ENCODE measurements at regions of chr11 and their contacts with region 1.

Region 1: GRCh38 chr11:38019072-38019755 is 1421.2 kb upstream of the RAG2 start:
- DNase-seq: peak; percentile 87
- ATAC-seq: peak; percentile 76
- H3K4me3 ChIP-seq: no peak overlapping the region
- H3K27ac ChIP-seq: peak overlapping the region; percentile 21
- H3K4me1 ChIP-seq: peaks cover 14% of the 10 kb centered on the region
- H3K27me3 ChIP-seq: no peaks in the 10 kb centered on the region
- CTCF ChIP-seq: peak; percentile 41; the same call in 1 of the 2 replicates

Region 2: DNA sequence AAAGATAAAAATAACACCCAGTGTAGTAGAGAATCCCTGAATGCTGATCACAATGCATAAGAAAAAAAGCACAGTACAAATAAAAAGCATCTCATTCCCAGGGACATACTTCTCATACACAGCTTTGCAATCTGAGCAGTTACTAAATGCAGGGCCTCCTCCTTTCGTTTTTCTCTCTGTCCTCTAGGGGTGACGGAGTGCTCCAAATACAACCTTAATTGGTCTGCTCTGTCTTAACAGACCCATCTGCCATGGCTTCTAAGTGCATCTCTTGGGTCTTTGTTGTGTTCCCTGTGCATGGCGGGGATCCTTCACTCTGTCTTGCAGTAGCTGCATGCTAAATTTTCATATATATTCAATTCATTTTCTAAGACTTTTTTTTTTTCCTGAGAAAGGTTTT is 307.0 kb before region 1 on chr11:
- CTCF ChIA-PET with region 1: interaction called, 10 read pairs
- POLR2A ChIA-PET with region 1: no interaction called
- intact Hi-C with region 1: no loop called
- DNase-seq: peak; percentile 20
- ATAC-seq: peak; percentile 64
- H3K4me3 ChIP-seq: no peak overlapping the region
- H3K27ac ChIP-seq: no peak overlapping the region
- H3K4me1 ChIP-seq: no peaks in the 10 kb centered on the region
- H3K27me3 ChIP-seq: no peaks in the 10 kb centered on the region
- CTCF ChIP-seq: peak; percentile 48

Region 3: GRCh38 chr11:38169012-38169684 is 149.9 kb after region 1 on chr11:
- CTCF ChIA-PET with region 1: no interaction called
- POLR2A ChIA-PET with region 1: no interaction called
- intact Hi-C with region 1: no loop called
- DNase-seq: peak; percentile 85
- ATAC-seq: peak; percentile 93
- H3K4me3 ChIP-seq: no peak overlapping the region
- H3K27ac ChIP-seq: 0 out of 2 replicates have a peak overlapping the region, but pooled peaks have one; percentile 30
- H3K4me1 ChIP-seq: peaks cover 15% of the 10 kb centered on the region
- H3K27me3 ChIP-seq: no peaks in the 10 kb centered on the region
- CTCF ChIP-seq: no peak